ENCODE measurements at regions of chr11 and their contacts with region 1.

Region 1: GRCh38 chr11:6362873-6363678 is 27.2 kb upstream of the SMPD1 start:
- DNase-seq: peak; percentile 78
- H3K4me3 Mint-ChIP-seq: no peak overlapping the region
- H3K27ac Mint-ChIP-seq: no peak overlapping the region
- H3K4me1 Mint-ChIP-seq: no peaks in the 10 kb centered on the region
- H3K27me3 Mint-ChIP-seq: no peaks in the 10 kb centered on the region

Region 2: DNA sequence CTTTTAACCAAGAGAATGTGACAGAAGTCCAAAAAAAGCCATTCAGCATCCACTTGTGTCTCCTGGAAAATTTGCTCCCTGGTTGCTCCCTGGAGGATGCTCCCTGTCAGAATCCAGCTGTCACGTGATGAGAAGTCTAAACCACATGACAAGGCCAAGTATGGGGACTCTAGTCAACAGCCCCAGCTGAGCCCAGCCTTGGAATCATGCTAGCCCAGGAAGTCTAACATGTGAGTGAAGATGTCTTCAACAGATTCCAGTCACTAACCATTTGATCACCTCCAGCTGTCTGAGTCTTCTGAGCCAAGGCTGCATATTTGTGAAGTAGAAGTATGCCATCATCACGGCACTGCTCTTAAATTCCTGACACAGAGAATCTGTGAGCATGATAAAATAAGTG is 251.4 kb before region 1 on chr11:
- CTCF ChIA-PET with region 1: no interaction called
- POLR2A ChIA-PET with region 1: no interaction called
- DNase-seq: no peak
- H3K4me3 Mint-ChIP-seq: no peak overlapping the region
- H3K27ac Mint-ChIP-seq: no peak overlapping the region
- H3K4me1 Mint-ChIP-seq: no peaks in the 10 kb centered on the region
- H3K27me3 Mint-ChIP-seq: peaks cover 4% of the 10 kb centered on the region

Region 3: DNA sequence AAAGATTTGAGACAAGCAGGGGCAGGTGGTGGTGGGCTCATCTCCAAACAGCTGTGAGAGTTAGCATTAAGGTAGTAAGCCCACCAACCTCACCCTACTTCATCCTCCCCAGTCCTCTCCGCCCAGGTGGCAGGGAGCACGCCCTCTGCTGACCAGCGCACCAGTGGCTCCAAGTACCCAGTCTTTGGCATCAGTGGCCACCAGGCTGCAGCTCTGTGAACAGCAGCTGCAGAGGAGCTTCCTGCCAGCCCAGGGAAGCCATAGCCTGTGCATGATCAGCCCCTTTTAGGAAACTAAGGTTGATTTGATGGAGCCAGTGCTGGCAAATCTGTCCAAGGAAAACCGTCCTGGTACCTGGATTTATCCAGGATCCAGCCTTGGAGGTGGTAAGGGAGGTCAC is 64.5 kb before region 1 on chr11:
- CTCF ChIA-PET with region 1: interaction called, 16 read pairs
- POLR2A ChIA-PET with region 1: no interaction called
- DNase-seq: peak; percentile 18
- H3K4me3 Mint-ChIP-seq: no peak overlapping the region
- H3K27ac Mint-ChIP-seq: no peak overlapping the region
- H3K4me1 Mint-ChIP-seq: no peaks in the 10 kb centered on the region
- H3K27me3 Mint-ChIP-seq: peaks cover 7% of the 10 kb centered on the region

Region 4: DNA sequence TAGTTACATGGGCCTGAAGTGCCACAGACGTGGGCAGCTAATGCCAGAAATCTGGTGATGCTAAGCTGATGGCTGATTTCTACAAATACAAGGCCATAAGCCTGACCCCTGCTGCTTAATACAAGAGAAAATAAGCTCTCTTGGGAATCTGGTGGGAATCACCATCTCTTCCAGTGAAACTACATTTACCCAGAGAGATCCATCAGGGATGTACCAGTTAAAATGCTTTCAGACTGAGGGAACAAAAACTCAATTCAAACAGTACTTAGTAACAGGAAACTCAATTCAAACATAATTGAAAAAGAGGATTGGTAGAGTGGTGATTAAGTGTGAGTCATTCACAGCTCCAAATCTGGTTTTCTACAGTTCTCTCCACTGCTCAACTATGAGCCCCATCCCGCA is 41.1 kb before region 1 on chr11:
- CTCF ChIA-PET with region 1: interaction called, 15 read pairs
- POLR2A ChIA-PET with region 1: interaction called, 4 read pairs
- DNase-seq: no peak
- H3K4me3 Mint-ChIP-seq: peak overlapping the region; percentile 43
- H3K27ac Mint-ChIP-seq: peak overlapping the region; percentile 93
- H3K4me1 Mint-ChIP-seq: peaks cover 43% of the 10 kb centered on the region
- H3K27me3 Mint-ChIP-seq: peaks cover 2% of the 10 kb centered on the region